K562 (cell line): ENCODE measurements at regions of chr1 and their contacts with region 1.

Region 1: GRCh38 chr1:205249651-205250050 is 21.9 kb downstream of the TMCC2 start:
- DNase-seq: no peak
- ATAC-seq: no peak
- H3K4me3 ChIP-seq: no peak overlapping the region
- H3K27ac ChIP-seq: no peak overlapping the region
- H3K4me1 ChIP-seq: peaks cover 21 to 23% of the 10 kb centered on the region in 2 experiments
- H3K27me3 ChIP-seq: peaks cover 0 to 12% of the 10 kb centered on the region in 2 experiments; a peak in 2 of 5 replicates
- CTCF ChIP-seq: no peak
- EP300 ChIP-seq: no peak
- POLR2A ChIP-seq: no peak
- RAD21 ChIP-seq: no peak

Region 2: GRCh38 chr1:204647114-204647804 is 602.4 kb before region 1 on chr1:
- CTCF ChIA-PET with region 1: no interaction called
- POLR2A ChIA-PET with region 1: no interaction called
- in situ Hi-C with region 1: no loop called
- intact Hi-C with region 1: no loop called
- DNase-seq: peak; percentile 92 to 93 (median 92)
- ATAC-seq: peak; percentile 99
- H3K4me3 ChIP-seq: no peak overlapping the region
- H3K27ac ChIP-seq: peak overlapping the region; percentile 17; the same call in 2 of the 3 replicates
- H3K4me1 ChIP-seq: peaks cover 3 to 5% of the 10 kb centered on the region in 2 experiments; a peak in 3 of 5 replicates
- H3K27me3 ChIP-seq: peaks cover 21 to 42% of the 10 kb centered on the region in 2 experiments; a peak in 4 of 5 replicates
- CTCF ChIP-seq: no peak
- EP300 ChIP-seq: peak; percentile 78
- POLR2A ChIP-seq: no peak
- RAD21 ChIP-seq: peak in 1 of 2 experiments; percentile 33; a peak in 2 of 4 replicates

Region 3: DNA sequence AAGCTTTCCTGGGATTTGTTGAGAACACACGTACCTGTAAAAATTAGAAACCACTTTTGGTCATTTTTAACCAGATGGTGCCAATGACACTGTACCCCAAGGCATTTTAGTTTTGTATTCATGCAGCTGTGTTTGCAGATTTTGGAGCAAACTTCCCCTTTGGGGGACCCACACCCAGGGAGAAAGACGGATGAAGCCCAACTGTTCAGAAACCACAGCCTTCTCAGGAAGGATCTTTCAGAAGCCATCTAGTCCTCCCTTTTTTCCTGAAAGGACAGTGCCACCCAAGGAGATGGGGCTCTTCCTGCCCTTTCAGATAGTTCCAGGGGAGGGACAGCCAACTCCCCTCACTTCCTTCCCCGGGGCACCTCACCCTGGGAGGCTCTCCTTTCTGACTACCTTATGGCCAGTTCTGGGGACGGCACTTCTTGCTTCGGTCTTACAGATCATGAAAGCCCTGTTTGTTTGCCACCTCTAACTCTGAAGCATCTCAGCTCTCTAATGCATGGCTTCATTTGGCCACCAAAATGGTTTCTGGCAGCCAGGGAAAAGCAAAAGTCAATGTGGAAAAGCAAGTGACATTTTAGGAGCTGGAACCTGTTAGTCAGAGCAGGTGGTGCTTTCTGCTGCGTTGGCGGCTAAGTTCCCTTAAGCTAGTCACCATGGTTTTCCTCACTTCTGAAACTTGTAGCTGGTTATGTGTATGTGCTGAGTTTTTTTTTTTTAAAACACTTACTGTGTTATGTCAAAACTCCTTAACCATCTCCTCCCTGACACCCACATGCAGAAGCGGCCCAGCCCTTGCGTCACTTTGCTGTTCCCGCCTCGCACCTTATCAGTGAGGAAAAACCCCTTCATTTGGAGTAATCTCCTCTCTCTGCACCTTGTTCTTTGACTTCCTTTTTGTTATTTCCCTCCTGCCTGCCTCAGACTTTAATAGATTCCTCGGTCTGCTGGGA is 11.8 kb before region 1 on chr1:
- CTCF ChIA-PET with region 1: interaction called, 3 read pairs
- POLR2A ChIA-PET with region 1: interaction called, 21 read pairs
- in situ Hi-C with region 1: no loop called
- intact Hi-C with region 1: no loop called
- DNase-seq: peak; percentile 60 to 81 (median 68)
- ATAC-seq: peak; percentile 80
- H3K4me3 ChIP-seq: no peak overlapping the region
- H3K27ac ChIP-seq: no peak overlapping the region
- H3K4me1 ChIP-seq: peaks cover 17 to 23% of the 10 kb centered on the region in 2 experiments
- H3K27me3 ChIP-seq: peaks cover 0 to 10% of the 10 kb centered on the region in 2 experiments; a peak in 1 of 5 replicates
- CTCF ChIP-seq: no peak
- EP300 ChIP-seq: peak; percentile 57; the same call in 1 of the 2 replicates
- POLR2A ChIP-seq: no peak
- RAD21 ChIP-seq: no peak